Naive thymus-derived CD4-positive, alpha-beta T cell (primary cell): ENCODE measurements at regions of chr16 and their contacts with region 1.

Region 1: GRCh38 chr16:29148867-29149272 is 164.0 kb downstream of the LAT start:
- DNase-seq: peak; percentile 49 to 94 (median 92)
- ATAC-seq: peak; percentile 96
- H3K4me3 ChIP-seq: peak overlapping the region; percentile 13
- H3K4me3 Mint-ChIP-seq: peak overlapping the region; percentile 56 to 85 (median 74)
- H3K27ac ChIP-seq: peak overlapping the region; percentile 80
- H3K27ac Mint-ChIP-seq: peak overlapping the region; percentile 88 to 100 (median 98)
- H3K4me1 ChIP-seq: peaks cover 22 to 34% of the 10 kb centered on the region in 2 donors
- H3K4me1 Mint-ChIP-seq: peaks cover 25 to 73% (median 46%) of the 10 kb centered on the region in 7 donors
- H3K27me3 ChIP-seq: no peaks in the 10 kb centered on the region
- H3K27me3 Mint-ChIP-seq: no peaks in the 10 kb centered on the region

Region 2: DNA sequence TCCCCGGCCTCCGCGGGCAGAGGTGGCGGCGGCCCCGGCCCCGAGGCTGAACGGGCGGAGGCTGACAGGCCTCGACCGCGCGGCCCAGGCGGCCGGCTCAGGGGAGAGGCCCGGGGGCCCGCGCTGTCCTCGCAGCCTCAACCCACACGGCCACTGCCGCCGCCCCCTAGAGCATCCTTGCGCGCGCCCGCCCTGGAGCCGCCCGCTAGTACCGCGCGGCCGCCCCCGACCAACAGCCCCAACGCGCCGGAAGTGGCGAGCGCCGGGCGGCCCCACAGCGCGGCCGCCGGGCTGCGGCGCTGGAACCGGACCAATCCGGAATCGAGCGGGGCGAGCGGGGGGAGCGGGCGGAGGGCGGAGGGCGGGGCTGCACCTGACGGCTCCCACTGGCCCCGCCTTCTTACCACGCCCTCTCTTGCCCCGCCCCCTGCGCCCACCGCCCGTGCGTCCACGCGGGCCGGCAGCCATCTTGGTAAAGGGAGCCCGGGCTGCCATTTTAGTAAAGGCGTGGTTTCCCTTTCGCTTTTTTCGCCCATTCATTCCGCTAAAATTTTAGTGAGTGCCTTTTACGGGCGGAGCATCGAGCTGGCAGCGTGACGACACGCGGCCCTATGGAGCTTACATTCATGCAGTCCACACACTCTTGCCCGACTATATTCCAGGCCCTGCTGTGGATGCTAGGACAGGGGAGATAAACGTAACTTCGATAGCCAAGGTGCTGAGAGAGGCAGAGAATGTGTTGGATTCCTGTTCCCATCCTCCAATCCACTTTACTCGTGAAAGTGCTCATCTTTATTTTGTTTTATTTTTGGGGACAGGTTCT is 936.9 kb before region 1 on chr16 and contains the start of gene XPO6:
- CTCF ChIA-PET with region 1: no interaction called
- POLR2A ChIA-PET with region 1: no interaction called
- intact Hi-C with region 1: no loop called
- DNase-seq: peak; percentile 95 to 100 (median 98)
- ATAC-seq: peak; percentile 97
- H3K4me3 ChIP-seq: peak within 1 kb of the TSS; percentile 72
- H3K4me3 Mint-ChIP-seq: peak within 1 kb of the TSS; percentile 65 to 98 (median 93)
- H3K27ac ChIP-seq: peak within 1 kb of the TSS; percentile 85
- H3K27ac Mint-ChIP-seq: peak within 1 kb of the TSS; percentile 80 to 98 (median 94)
- H3K4me1 ChIP-seq: peaks cover 19 to 21% of the 10 kb centered on the region in 2 donors
- H3K4me1 Mint-ChIP-seq: peaks cover 8 to 39% (median 32%) of the 10 kb centered on the region in 7 donors
- H3K27me3 ChIP-seq: no peaks in the 10 kb centered on the region
- H3K27me3 Mint-ChIP-seq: no peaks in the 10 kb centered on the region
- total RNA-seq, gene XPO6: 232 to 437 (median 385) TPM

Region 3: DNA sequence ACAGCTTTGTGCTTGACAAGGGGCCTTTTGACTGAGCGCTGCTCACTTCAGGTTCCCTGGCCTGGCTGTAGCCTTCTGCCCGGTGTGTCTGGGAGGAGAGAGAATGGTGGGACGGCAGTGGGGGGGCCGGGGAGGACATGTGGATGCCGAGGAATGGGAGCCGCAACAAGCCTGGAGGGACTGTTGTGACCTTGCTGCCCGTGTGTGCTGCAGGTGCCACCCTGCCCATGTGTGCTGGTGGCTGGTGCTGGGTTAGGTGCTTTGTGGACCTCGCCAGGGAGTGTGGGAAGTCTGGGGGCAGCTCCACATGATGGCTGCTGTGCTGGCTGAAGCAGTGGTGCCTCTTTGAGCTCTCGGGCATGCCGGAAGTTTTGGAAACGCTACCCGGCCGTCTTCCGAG is 31.9 kb before region 1 on chr16:
- CTCF ChIA-PET with region 1: interaction called, 3 read pairs
- POLR2A ChIA-PET with region 1: no interaction called
- intact Hi-C with region 1: loop called in 1 of 2 experiments (anchors 1 kb)
- DNase-seq: no peak
- ATAC-seq: no peak
- H3K4me3 ChIP-seq: no peak overlapping the region
- H3K4me3 Mint-ChIP-seq: no peak overlapping the region
- H3K27ac ChIP-seq: no peak overlapping the region
- H3K27ac Mint-ChIP-seq: peak overlapping the region in 4 of 9 donors; percentile 60 to 86 (median 71)
- H3K4me1 ChIP-seq: peaks cover 0 to 9% of the 10 kb centered on the region in 2 donors
- H3K4me1 Mint-ChIP-seq: peaks cover 8 to 53% (median 20%) of the 10 kb centered on the region in 7 donors
- H3K27me3 ChIP-seq: no peaks in the 10 kb centered on the region
- H3K27me3 Mint-ChIP-seq: no peaks in the 10 kb centered on the region

Region 4: DNA sequence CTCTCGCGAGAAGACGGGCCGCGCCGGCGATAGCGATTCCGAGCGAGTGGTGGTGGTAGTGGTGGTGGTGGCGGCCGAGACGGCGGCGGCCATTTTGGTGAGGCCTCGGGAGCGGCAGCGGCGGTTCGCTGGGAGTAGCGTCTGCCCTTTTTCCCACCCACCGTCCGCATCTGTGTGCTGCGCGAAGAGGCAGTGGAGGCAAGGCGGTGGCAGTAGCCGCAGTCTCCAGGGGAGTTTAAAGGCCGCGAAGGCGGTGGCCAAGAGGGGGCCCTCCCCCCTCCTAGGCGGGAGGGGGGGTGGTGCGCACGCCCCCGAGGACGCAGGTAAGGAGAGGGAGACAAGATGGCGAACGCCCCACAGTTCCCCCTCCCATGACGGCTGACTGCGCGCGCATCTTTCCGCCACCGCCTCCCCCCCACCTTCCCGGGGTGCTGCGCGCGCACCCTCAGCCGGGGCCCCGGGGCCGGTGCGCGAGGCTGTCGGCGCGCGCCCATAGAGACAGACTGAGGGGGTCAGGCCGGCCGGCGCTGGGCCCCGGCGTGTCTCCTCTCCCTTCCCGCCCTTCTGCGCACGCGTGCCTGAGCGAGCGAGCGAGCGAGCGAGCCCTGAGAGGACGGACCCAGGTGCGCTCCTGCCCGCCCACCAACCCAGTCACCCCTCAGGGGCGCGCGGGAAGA is 1549.4 kb after region 1 on chr16:
- CTCF ChIA-PET with region 1: no interaction called
- POLR2A ChIA-PET with region 1: no interaction called
- intact Hi-C with region 1: no loop called
- DNase-seq: peak; percentile 98 to 100 (median 99)
- ATAC-seq: peak; percentile 86
- H3K4me3 ChIP-seq: peak overlapping the region; percentile 86
- H3K4me3 Mint-ChIP-seq: peak overlapping the region; percentile 87 to 99 (median 97)
- H3K27ac ChIP-seq: peak overlapping the region; percentile 99
- H3K27ac Mint-ChIP-seq: peak overlapping the region; percentile 99 to 100 (median 100)
- H3K4me1 ChIP-seq: peaks cover 15 to 35% of the 10 kb centered on the region in 2 donors
- H3K4me1 Mint-ChIP-seq: peaks cover 26 to 48% (median 41%) of the 10 kb centered on the region in 7 donors
- H3K27me3 ChIP-seq: no peaks in the 10 kb centered on the region
- H3K27me3 Mint-ChIP-seq: no peaks in the 10 kb centered on the region